Sigmoid colon (tissue), 7 donors: ENCODE measurements at regions of chr4 and their contacts with region 1.

Region 1: DNA sequence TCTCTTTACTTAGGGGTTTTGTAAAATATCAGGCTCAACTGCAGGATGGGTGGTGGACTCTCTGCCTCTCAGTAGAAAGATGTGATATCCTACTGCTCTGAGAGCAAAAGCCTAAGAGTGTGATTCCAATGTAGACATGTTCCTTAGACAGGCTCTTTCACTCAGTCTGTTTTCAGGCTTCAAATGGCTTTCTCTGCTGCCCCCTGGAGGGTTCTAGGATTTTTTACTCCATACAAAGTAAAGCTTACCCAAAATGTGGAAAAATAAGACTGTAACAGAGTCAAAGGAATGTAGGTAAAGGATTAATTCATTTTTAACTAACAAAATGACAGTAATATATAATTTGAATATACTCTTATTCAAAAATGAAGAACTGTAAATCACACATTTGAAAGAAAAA is 32.1 kb downstream of the ZGRF1 start:
- DNase-seq: no peak
- H3K4me3 ChIP-seq: no peak overlapping the region
- H3K27ac ChIP-seq: no peak overlapping the region
- H3K4me1 ChIP-seq: no peaks in the 10 kb centered on the region
- H3K27me3 ChIP-seq: no peaks in the 10 kb centered on the region
- CTCF ChIP-seq: peak in 2 of 4 experiments; percentile 20 to 48
- EP300 ChIP-seq: no peak
- POLR2A ChIP-seq: no peak

Region 2: DNA sequence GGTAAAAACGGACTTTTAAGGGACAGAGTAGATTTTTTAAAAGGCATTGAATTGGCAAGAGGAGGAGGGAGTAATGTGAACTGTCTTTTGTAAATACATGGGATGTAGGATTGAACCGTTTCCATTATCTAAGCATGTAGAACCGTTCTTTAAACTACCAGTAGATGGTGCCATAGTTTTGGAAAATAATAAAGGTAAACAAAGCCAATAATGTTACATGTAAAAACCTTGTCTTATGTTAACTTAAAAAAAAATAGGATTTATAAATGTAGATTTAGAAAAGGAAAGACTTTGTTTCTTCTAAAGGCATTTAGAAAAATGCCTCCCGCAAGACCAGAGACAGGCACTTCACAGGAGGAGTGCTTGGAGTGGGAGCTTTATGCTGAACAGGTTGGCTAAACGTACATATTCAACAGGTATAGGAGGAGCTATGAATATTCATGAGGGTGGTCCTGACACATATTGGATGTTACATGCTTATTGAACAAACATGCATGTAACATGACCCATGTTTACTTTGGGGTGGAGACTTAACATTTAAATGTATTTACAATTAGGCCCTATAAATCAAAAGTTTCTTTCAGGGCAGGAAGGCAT is 504.8 kb before region 1 on chr4:
- intact Hi-C with region 1: loop called (anchors 10 kb)
- DNase-seq: no peak
- H3K4me3 ChIP-seq: no peak overlapping the region
- H3K27ac ChIP-seq: no peak overlapping the region
- H3K4me1 ChIP-seq: no peaks in the 10 kb centered on the region
- H3K27me3 ChIP-seq: no peaks in the 10 kb centered on the region
- CTCF ChIP-seq: peak; percentile 29 to 64 (median 44)
- EP300 ChIP-seq: no peak
- POLR2A ChIP-seq: no peak

Region 3: GRCh38 chr4:112327965-112328733 is 276.4 kb before region 1 on chr4:
- intact Hi-C with region 1: loop called (anchors 10 kb)
- DNase-seq: no peak
- H3K4me3 ChIP-seq: no peak overlapping the region
- H3K27ac ChIP-seq: no peak overlapping the region
- H3K4me1 ChIP-seq: no peaks in the 10 kb centered on the region
- H3K27me3 ChIP-seq: no peaks in the 10 kb centered on the region
- CTCF ChIP-seq: peak in 1 of 4 experiments; percentile 31
- EP300 ChIP-seq: no peak
- POLR2A ChIP-seq: no peak

Region 4: DNA sequence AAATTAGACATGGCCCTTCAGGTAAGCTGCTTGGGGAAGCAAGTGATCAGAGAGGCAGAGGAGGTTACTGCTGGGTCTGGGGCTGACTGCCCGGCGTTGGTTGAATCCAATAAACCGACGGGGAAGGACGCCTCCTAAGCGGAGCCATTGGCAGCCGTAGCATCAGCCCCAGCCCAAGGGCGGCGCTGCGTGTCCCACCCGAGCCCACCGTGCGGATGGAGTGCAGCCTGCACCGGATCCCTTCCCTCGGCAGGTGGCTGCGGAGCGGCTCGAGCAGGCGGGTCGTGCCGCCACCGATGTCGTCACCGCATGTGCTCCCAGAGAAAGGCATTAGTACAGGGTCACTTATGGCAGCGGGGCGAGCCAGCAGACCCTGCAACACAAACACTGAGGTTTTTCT is 225.3 kb before region 1 on chr4:
- intact Hi-C with region 1: no loop called
- DNase-seq: no peak
- H3K4me3 ChIP-seq: no peak overlapping the region
- H3K27ac ChIP-seq: no peak overlapping the region
- H3K4me1 ChIP-seq: no peaks in the 10 kb centered on the region
- H3K27me3 ChIP-seq: no peaks in the 10 kb centered on the region
- CTCF ChIP-seq: no peak
- EP300 ChIP-seq: no peak
- POLR2A ChIP-seq: no peak

Region 5: DNA sequence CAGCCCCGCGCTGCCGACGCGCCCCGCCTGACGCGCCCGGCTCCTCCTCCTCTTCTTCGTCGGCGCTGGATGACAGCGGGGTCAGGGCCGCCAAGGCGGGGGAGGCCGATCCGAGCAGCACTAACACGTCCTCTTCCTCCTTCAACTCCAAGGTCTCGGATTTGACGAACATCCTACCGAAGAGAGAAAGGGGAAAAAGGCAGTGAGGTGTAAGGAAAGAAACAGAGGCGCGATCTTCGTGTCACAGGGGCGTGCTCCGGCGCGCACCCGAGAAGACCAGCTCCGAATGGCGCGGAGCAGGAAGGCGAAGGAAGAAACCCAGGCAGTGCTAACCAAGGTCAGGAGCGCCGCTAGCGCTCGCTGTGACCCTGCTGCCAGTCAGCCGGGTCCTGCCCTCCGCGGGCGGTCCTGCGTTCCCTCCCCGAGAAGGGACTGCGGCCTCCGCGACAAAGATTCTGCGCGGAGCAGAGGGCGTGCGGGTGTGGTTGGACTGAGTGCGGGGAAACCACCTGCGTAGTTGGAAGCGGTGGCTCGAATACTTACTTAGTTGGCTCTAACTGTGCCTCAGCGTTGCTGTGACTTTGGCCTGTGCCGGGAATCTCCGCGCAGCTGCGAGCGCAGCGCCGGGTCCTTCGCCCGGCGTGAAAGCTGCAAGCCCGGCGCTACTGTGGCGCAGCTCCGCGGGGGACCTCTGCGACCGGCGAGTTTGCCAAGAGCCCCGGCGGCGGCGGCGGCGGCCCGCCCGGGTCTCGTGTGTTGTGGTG is 89.1 kb before region 1 on chr4:
- intact Hi-C with region 1: no loop called
- DNase-seq: no peak
- H3K4me3 ChIP-seq: peak overlapping the region; percentile 17 to 56 (median 38)
- H3K27ac ChIP-seq: no peak overlapping the region
- H3K4me1 ChIP-seq: peaks cover 0 to 45% (median 42%) of the 10 kb centered on the region in 4 donors
- H3K27me3 ChIP-seq: peaks cover 75 to 100% (median 92%) of the 10 kb centered on the region in 3 donors
- CTCF ChIP-seq: no peak
- EP300 ChIP-seq: no peak
- POLR2A ChIP-seq: no peak

Region 6: DNA sequence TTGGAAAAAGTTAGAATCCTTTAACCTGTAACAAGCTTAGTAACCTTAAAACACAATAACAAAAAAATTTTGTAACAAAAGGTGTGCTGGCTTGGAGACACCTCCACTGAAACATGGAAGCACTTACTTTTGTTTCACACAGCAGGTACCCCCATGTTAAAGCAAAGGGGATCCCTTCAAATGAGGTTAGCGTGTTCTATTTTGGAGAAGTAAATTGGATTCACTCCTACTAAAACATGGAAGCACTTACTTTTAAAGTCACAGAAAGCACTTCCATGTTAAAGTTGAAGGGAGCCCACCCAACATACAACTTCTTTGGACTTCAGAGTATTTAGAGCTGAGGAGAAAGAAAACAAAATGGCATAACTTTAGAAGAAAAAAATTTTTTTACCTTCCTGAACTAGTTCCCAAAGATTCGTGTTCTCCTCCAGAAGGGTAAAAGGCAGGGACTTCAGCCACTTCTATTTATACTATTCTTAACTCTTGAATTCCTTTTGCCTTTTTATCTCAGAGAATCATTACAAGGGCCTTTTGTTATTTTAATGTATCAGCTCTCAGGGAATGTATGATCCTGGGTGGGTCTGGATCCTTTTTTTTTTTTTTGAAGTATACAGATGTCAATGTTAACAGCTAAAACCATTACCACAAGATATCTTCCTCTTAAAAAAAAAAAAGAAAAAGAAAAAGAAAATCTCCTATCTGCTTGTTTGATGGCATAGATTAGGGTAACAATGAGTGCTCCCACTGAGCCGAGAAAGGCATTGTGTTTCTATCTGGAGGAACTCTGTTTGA is 43.9 kb after region 1 on chr4:
- intact Hi-C with region 1: no loop called
- DNase-seq: no peak
- H3K4me3 ChIP-seq: no peak overlapping the region
- H3K27ac ChIP-seq: no peak overlapping the region
- H3K4me1 ChIP-seq: no peaks in the 10 kb centered on the region
- H3K27me3 ChIP-seq: no peaks in the 10 kb centered on the region
- CTCF ChIP-seq: no peak
- EP300 ChIP-seq: no peak
- POLR2A ChIP-seq: no peak